Activated CD4-positive, alpha-beta memory T cell treated with anti-CD3 and anti-CD28 coated beads for 36 hours (primary cell): ENCODE measurements at regions of chr4 and their contacts with region 1.

Region 1: DNA sequence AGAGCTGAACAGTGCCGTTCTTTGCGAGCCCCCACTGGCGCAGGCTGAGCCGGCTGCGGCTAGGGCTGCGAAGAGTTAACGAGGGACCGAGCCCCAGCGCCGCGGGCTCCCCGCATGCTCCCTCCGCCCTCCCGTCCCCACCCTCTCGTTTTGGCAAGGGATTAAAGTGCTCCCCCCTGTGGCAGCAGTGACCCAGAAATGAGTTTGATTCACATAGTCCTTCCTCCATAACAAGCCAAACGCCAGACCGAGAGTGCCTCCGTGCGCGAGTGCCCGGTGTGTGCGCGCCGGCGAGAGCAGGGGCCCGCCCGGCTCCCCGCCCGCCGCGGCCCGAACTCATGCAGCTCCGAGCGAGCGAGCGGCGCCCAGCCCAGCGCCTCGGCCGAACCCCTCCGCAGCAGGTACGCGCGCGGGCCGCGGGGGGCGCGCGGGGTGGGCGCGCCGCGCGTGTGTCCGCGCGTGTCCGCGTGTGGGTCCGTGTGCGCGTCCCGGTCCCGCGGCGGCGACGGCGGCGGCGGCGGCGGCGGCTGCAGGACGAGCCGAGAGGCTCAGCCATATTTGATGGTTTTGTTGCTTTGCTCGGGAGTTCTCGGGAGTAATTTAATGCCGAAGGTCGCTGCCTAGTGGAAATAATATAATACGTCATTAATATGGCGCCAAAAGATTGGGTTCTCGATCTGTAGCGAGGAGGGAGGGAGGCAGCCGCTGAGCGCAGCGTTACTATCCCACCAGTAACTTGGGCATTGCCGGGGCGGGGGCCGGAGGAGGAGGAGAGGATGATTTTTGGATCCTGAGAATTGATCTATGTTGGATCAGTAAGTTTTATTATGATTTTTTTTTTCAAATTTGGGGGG is at the start of gene JADE1:
- DNase-seq: peak; percentile 95
- H3K4me3 Mint-ChIP-seq: peak within 1 kb of the TSS; percentile 89
- H3K27ac Mint-ChIP-seq: peak within 1 kb of the TSS; percentile 96
- H3K4me1 Mint-ChIP-seq: peaks cover 13% of the 10 kb centered on the region
- H3K27me3 Mint-ChIP-seq: no peaks in the 10 kb centered on the region
- total RNA-seq, gene JADE1: 25.4 to 28.3 TPM

Region 2: DNA sequence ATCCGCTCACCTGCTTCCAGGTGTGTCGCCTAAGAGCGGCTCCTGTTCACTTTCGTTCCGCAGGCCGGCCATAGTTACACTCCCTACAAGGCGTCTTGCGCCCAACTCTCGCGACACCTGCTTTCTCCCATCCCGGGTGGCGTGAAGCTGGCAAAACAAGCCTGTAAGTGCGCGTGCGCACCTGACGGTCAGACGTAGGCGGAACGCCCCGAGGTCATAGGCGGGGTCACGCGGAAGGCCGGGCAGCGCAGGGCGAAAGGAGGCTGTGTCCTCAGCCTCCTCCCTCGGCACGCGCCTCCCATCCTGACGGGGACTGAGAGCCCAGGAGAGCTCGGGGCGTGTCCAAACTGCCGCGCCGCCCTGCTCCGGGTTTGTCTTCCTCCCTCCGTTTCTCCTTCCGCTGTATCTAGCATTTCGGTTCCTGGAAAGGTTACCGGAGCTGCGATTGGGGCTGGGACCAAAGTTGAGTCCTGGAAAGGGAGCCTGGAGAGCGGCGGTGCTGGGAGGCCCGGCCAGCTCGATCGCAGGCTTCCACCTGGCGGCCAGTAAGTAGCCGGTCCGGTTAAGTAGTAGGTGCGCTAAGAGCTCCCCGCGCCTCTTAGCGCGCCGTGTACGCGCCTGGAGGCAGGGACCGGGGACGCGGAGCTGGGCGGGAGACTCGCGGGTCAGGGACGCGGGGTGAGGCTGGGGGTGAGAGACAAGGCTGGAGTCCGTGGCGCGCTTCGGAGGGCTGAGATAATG is 844.5 kb before region 1 on chr4 and contains the starts of genes ABHD18 and MFSD8:
- CTCF ChIA-PET with region 1: no interaction called
- POLR2A ChIA-PET with region 1: interaction called, 4 read pairs
- intact Hi-C with region 1: loop called (anchors 2 kb)
- DNase-seq: peak; percentile 100
- H3K4me3 Mint-ChIP-seq: peak within 1 kb of the TSS; percentile 94
- H3K27ac Mint-ChIP-seq: peak within 1 kb of the TSS; percentile 95
- H3K4me1 Mint-ChIP-seq: peaks cover 38% of the 10 kb centered on the region
- H3K27me3 Mint-ChIP-seq: no peaks in the 10 kb centered on the region
- total RNA-seq, gene ABHD18: 17.3 to 18.9 TPM
- total RNA-seq, gene MFSD8: 13.0 to 15.3 TPM

Region 3: DNA sequence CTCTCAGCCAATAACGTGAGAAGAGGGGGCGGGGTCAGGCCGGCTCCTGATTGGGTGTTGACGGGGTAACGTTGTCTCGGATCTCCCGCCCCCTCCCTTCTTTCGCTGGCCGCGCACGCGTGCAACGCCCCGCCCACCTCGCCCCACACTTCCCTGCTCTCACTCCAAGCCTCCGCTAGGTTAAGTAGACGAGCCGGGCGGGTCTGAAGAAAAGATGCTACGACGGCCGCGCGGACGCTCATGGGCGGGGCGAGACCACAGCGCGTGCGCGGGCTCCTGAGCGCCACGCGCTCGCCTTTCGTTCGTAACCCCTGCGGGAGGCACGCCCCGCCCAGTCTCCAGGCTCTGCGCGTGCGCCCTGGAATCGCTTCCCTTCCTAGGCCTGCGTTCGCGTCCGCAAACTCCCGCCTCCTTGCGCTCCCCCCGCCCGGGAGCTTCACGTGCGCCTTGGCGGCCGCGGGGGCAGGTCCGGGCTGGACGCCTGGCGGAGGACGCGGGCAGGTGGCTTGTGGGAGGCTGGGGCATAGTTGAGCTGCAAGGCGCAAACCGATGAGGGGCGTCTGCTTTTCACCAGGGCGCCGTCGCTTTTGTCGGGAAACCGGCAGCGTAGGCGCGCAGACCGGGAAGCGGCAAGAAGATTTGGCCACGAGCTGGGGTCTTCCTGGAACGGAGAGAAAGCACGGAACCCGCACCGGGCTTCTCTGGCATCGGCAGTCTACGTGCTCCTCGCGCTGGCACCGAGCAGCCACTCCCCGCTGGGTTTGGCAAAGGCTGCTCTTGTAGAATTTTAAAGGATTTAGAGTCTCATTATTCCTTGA is 521.6 kb before region 1 on chr4:
- CTCF ChIA-PET with region 1: no interaction called
- POLR2A ChIA-PET with region 1: interaction called, 5 read pairs
- intact Hi-C with region 1: loop called (anchors 1 kb)
- DNase-seq: peak; percentile 100
- H3K4me3 Mint-ChIP-seq: peak overlapping the region; percentile 93
- H3K27ac Mint-ChIP-seq: peak overlapping the region; percentile 88
- H3K4me1 Mint-ChIP-seq: peaks cover 31% of the 10 kb centered on the region
- H3K27me3 Mint-ChIP-seq: no peaks in the 10 kb centered on the region

Region 4: GRCh38 chr4:128574706-128575105 is 235.0 kb before region 1 on chr4:
- CTCF ChIA-PET with region 1: interaction called, 8 read pairs
- POLR2A ChIA-PET with region 1: no interaction called
- intact Hi-C with region 1: loop called (anchors 1 kb)
- DNase-seq: peak; percentile 82
- H3K4me3 Mint-ChIP-seq: no peak overlapping the region
- H3K27ac Mint-ChIP-seq: no peak overlapping the region
- H3K4me1 Mint-ChIP-seq: no peaks in the 10 kb centered on the region
- H3K27me3 Mint-ChIP-seq: peaks cover 4% of the 10 kb centered on the region

Region 5: GRCh38 chr4:128831531-128832242 is 22.0 kb after region 1 on chr4:
- CTCF ChIA-PET with region 1: interaction called, 4 read pairs
- POLR2A ChIA-PET with region 1: interaction called, 5 read pairs
- intact Hi-C with region 1: loop called (anchors 1 kb)
- DNase-seq: no peak
- H3K4me3 Mint-ChIP-seq: no peak overlapping the region
- H3K27ac Mint-ChIP-seq: no peak overlapping the region
- H3K4me1 Mint-ChIP-seq: peaks cover 45% of the 10 kb centered on the region
- H3K27me3 Mint-ChIP-seq: no peaks in the 10 kb centered on the region

Region 6: GRCh38 chr4:129093191-129093920 is 283.7 kb after region 1 on chr4 and contains the start of gene SCLT1:
- CTCF ChIA-PET with region 1: interaction called, 4 read pairs
- POLR2A ChIA-PET with region 1: interaction called, 17 read pairs
- intact Hi-C with region 1: loop called (anchors 1 kb)
- DNase-seq: peak; percentile 98
- H3K4me3 Mint-ChIP-seq: peak within 1 kb of the TSS; percentile 53
- H3K27ac Mint-ChIP-seq: no peak within 1 kb of the TSS
- H3K4me1 Mint-ChIP-seq: peaks cover 33% of the 10 kb centered on the region
- H3K27me3 Mint-ChIP-seq: no peaks in the 10 kb centered on the region
- total RNA-seq, gene SCLT1: 20.8 to 20.9 TPM